Activated CD4-positive, alpha-beta T cell treated with anti-CD3 and anti-CD28 coated beads, Interleukin-2, amount 10 ng/mL, durations not matched to agents 7 days and 5 days (primary cell): ENCODE measurements at regions of chr14 and their contacts with region 1.

Region 1: DNA sequence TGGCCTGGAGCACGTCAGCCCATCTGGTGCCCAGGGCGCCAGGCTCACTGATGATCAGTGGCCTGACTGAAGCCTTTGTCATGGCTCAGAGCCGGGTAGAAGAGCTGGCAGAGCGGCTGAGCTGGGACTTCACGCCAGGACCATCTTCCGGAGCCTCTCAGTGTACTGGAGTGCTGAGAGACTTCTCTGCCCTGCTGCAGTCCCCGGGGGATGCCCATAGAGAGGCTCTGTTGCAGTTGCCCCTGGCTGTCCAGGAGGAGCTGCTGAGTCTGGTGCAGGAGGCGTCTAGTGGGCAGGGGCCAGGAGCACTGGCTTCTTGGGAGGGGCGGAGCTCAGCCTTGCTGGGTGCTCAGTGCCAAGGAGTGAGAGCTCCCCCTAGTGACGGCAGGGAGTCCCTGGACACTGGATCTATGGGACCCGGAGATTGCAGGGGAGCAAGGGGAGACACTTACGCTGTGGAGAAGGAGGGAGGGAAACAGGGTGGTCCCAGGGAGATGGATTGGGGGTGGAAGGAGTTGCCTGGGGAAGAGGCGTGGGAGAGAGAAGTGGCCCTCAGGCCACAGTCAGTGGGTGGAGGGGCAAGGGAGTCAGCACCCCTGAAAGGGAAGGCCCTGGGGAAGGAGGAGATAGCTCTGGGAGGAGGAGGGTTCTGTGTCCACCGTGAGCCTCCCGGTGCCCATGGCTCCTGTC is 2.0 kb downstream of the KHNYN start:
- DNase-seq: peak; percentile 95
- H3K4me3 Mint-ChIP-seq: peak overlapping the region; percentile 90
- H3K27ac Mint-ChIP-seq: peak overlapping the region; percentile 98
- H3K4me1 Mint-ChIP-seq: peaks cover 56% of the 10 kb centered on the region
- H3K27me3 Mint-ChIP-seq: no peaks in the 10 kb centered on the region

Region 2: DNA sequence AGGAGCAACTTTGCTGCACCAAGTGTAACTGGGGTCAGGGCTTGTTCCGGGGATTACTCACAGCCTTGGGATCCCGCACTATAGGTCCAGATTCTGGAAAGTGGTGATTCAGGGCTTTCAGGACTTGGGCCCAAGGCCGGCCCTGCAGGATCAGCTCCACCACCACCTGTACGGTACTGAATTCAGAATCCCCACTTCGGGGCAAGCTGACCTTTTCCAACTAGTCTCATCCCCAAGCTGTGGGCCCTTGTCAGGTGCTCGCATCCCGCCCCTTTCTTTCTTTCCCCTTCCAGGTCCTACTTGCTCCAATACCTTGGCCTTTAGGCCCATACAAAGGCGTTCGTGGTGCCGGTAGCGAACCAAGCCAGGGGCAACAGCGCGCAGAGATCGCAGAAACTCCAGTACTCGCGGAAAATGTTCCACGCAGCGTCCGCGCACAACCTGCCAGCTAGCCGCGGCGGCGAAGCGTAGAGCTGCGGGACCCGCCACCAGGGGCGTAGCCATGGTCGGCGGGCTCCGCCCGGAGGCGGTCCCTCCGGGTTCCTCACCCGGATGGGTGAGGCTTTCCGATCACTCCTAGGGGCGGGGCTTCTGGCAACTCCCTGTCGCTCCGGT is 189.8 kb before region 1 on chr14:
- CTCF ChIA-PET with region 1: interaction called, 17 read pairs
- POLR2A ChIA-PET with region 1: interaction called, 6 read pairs
- DNase-seq: peak; percentile 96
- H3K4me3 Mint-ChIP-seq: peak overlapping the region; percentile 95
- H3K27ac Mint-ChIP-seq: peak overlapping the region; percentile 100
- H3K4me1 Mint-ChIP-seq: peaks cover 58% of the 10 kb centered on the region
- H3K27me3 Mint-ChIP-seq: no peaks in the 10 kb centered on the region

Region 3: DNA sequence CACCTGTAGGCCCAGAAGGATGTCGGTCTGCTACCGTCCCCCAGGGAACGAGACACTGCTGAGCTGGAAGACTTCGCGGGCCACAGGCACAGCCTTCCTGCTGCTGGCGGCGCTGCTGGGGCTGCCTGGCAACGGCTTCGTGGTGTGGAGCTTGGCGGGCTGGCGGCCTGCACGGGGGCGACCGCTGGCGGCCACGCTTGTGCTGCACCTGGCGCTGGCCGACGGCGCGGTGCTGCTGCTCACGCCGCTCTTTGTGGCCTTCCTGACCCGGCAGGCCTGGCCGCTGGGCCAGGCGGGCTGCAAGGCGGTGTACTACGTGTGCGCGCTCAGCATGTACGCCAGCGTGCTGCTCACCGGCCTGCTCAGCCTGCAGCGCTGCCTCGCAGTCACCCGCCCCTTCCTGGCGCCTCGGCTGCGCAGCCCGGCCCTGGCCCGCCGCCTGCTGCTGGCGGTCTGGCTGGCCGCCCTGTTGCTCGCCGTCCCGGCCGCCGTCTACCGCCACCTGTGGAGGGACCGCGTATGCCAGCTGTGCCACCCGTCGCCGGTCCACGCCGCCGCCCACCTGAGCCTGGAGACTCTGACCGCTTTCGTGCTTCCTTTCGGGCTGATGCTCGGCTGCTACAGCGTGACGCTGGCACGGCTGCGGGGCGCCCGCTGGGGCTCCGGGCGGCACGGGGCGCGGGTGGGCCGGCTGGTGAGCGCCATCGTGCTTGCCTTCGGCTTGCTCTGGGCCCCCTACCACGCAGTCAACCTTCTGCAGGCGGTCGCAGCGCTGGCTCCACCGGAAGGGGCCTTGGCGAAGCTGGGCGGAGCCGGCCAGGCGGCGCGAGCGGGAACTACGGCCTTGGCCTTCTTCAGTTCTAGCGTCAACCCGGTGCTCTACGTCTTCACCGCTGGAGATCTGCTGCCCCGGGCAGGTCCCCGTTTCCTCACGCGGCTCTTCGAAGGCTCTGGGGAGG is 120.8 kb before region 1 on chr14 and contains the start of gene LTB4R:
- CTCF ChIA-PET with region 1: interaction called, 33 read pairs
- POLR2A ChIA-PET with region 1: interaction called, 3 read pairs
- DNase-seq: peak; percentile 62
- H3K4me3 Mint-ChIP-seq: peak within 1 kb of the TSS; percentile 77
- H3K27ac Mint-ChIP-seq: peak within 1 kb of the TSS; percentile 87
- H3K4me1 Mint-ChIP-seq: peaks cover 81% of the 10 kb centered on the region
- H3K27me3 Mint-ChIP-seq: no peaks in the 10 kb centered on the region
- total RNA-seq, gene LTB4R: 26.6 to 28.3 TPM

Region 4: DNA sequence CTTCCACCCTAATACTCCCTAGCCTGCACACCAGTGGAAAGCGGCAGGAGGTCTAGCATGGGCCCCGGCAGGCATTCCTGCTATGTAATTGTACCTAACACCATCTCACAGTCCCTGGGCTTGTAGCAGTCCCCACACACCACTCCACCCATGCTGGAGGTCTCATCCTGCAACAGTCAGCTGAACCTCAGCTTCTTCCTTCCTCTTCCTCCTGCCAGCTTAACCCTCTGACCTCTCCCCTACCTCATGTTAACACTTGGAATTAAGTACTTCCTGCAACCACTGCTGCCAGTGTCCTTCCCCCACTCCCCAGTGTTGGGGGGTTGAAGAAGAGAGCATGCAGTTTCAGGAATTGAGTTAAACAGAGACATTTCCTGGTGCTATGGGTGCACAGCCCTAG is 104.4 kb before region 1 on chr14:
- CTCF ChIA-PET with region 1: interaction called, 108 read pairs
- POLR2A ChIA-PET with region 1: no interaction called
- DNase-seq: no peak
- H3K4me3 Mint-ChIP-seq: no peak overlapping the region
- H3K27ac Mint-ChIP-seq: peak overlapping the region; percentile 77
- H3K4me1 Mint-ChIP-seq: peaks cover 40% of the 10 kb centered on the region
- H3K27me3 Mint-ChIP-seq: peaks cover 17% of the 10 kb centered on the region

Region 5: DNA sequence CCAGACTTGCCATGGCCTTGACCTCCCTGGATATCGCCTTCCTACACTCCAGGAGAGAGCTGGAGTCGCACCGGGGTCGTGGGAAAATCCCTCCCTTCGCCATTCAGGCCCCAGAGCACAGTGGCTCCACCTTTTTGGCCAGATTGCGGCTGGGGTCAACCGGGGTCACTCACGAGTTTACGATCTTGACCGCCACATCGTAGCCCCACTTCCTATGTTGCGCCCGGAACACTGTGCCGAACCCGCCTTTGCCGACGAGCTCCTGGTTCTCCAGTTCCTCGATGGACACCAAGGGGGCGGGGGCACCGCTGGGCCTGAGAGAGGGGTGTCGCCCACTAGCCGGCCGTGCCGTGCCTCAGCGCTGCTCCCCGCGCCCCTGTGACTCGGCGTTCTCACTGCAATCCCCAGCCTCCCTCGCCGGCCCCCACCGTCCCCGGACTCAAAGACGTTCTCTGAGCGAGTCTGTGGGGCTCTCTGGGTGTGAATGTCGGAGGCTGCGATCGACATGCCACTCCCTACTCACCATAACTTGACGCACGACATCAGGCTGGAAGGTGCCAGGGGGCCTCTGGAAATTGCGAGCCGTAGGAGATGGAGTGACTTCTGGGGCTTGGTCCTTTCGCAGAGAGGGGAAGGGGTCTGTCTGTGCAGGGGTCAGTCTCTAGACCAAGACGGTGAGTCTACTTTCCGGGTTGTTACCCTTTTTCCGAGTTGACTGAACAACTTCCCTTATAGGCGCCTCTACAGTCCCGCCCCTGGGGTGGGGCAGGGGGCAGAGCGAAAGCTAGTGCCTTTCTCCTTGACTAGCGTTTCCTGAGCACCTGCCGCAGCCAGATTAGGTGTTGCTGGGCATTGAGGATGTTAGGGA is 92.2 kb before region 1 on chr14 and contains the start of gene RIPK3:
- CTCF ChIA-PET with region 1: interaction called, 108 read pairs
- POLR2A ChIA-PET with region 1: interaction called, 18 read pairs
- DNase-seq: peak; percentile 85
- H3K4me3 Mint-ChIP-seq: peak within 1 kb of the TSS; percentile 94
- H3K27ac Mint-ChIP-seq: peak within 1 kb of the TSS; percentile 95
- H3K4me1 Mint-ChIP-seq: peaks cover 35% of the 10 kb centered on the region
- H3K27me3 Mint-ChIP-seq: peaks cover 31% of the 10 kb centered on the region
- total RNA-seq, gene RIPK3: 37.5 to 41.4 TPM

Region 6: DNA sequence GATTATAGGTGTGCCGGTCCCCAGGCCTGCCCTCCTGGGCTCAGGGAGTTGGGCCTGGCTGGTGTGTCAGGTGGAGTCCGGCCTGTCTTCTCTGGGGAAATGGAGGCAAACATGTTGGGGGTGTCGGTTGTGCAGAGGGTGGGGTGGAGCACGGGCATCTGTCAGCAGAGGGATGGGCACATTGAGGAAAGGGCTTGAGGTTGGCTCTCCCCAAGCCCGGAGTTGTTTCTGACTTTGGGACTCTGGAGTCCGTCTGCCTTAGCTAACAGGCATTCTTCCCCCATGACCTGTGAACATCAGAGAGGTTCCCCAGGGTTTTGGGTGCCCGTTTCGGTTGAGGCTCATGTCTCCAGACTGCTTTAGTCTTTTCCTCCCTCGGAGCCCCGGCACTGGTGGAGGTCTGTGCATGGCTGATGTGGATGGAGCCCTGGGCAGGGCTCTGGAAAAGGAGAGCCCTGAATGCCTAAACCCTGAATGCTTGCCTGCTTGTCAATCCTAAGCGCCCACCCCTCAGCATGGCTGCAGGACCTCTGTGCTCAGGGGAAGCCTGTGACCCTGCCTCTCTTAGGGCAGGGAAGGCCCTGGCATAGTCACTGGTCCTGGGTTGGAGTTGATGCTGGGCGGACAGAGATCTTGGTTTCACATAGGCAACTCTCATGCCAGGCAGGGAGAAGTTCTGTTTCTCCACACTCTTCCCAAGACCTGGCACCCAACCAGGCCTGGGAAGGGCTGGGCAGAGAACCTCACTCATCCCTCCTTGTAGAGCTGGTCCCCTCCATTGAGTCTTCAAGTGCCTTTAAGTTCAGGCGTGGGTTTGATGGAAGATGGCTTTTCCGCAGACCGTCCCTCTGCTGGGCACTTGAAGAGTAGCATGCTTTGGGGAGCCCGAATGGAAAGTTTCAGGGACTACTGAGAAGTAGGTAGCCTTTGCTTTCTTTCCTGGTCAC is 20.0 kb before region 1 on chr14:
- CTCF ChIA-PET with region 1: interaction called, 19 read pairs
- POLR2A ChIA-PET with region 1: no interaction called
- DNase-seq: peak; percentile 42
- H3K4me3 Mint-ChIP-seq: no peak overlapping the region
- H3K27ac Mint-ChIP-seq: no peak overlapping the region
- H3K4me1 Mint-ChIP-seq: no peaks in the 10 kb centered on the region
- H3K27me3 Mint-ChIP-seq: no peaks in the 10 kb centered on the region